GM10248 (cell line): ENCODE measurements at regions of chr6 and their contacts with region 1.

Region 1: GRCh38 chr6:43328528-43328927 is 19.9 kb upstream of the CRIP3 start:
- DNase-seq: no peak
- CTCF ChIP-seq: no peak

Region 2: DNA sequence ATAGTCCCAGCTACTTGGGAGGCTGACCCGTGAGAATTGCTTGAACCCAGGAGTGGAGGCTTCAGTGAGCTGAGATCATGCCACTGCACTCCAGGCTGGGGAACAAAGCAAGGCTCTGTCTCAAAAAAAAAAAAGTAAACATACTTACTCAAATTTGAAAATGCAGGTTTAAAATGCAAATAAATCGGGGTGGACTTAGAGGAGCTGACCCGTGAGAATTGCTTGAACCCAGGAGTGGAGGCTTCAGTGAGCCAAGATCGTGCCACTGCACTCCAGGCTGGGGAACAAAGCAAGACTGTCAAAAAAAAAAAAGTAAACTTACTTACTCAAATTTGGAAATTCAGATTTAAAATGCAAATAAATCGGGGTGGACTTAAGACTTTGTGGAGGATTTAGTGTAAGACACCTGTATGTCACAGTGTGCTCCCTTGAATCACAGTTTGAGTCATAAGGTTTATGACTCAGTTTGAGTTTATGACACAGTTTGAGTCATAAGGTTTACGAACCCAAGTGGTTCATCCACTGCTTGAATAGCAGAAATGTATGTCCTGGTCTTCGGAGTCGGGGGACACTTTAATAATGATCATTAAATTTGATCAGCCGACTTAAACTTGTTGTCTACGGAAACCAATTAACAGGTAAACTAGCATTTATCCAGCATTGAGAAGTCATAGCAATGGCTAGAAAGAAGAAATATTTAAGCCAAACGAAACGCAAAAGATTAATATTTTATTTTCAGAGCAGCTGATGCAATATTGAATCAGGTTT is 1104.1 kb before region 1 on chr6:
- CTCF ChIA-PET with region 1: no interaction called
- POLR2A ChIA-PET with region 1: no interaction called
- DNase-seq: peak; percentile 71
- CTCF ChIP-seq: no peak

Region 3: DNA sequence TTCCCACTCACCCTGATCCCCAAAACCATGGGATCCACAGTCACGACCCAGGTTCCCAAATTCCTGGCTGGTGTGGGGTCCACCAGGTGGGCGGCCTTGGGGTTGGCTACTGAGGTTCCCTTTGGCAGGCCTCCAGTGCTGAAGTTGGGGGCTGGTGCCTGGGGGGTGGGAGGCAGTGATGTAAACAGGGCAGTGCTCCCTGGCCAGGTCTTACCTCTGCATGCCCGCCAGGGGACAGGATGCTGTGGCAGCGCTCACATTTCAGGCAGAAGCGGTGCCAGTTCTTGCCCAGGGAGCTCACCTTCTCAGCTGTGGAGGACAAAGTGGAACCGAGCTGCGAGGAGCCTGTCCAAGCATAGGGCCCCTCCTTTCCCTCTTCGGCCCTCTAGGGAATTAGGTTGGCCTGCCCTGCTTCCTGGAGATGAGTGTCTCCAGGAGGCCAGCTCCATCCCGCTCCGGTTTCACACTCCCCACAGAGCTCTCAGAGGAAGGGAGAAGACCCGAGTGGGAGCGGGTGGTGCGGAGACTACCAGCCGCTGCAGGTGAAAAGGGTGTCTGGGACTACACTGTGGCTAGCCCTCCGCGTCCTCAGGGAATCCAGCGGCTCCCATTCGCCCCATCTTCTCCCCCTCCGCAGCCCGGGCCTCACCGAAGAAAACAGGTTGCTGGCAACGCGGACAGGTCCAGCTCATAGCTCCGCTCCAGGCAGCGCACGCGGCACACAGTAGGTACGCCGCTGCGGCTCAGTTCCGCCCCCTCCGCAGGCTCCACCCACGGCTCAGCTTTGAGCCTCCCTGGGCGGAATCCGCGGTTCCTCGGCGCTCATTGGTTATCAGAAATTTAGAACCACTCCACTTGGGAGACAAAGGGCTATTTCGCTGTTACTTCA is 20.2 kb before region 1 on chr6 and contains the start of gene CRIP3:
- CTCF ChIA-PET with region 1: interaction called, 33 read pairs
- POLR2A ChIA-PET with region 1: no interaction called
- DNase-seq: peak; percentile 57
- CTCF ChIP-seq: peak; percentile 27

Region 4: GRCh38 chr6:43355862-43356590 is 27.5 kb after region 1 on chr6:
- CTCF ChIA-PET with region 1: no interaction called
- POLR2A ChIA-PET with region 1: no interaction called
- DNase-seq: no peak
- CTCF ChIP-seq: peak; percentile 39